Activated CD4-positive, alpha-beta T cell treated with anti-CD3 and anti-CD28 coated beads for 36 hours (primary cell): ENCODE measurements at regions of chr11 and their contacts with region 1.

Region 1: GRCh38 chr11:117143871-117144476 is at the start of gene PAFAH1B2:
- DNase-seq: peak; percentile 98
- ATAC-seq: peak; percentile 93
- H3K4me3 Mint-ChIP-seq: peak within 1 kb of the TSS; percentile 99
- H3K27ac Mint-ChIP-seq: peak within 1 kb of the TSS; percentile 94
- H3K4me1 Mint-ChIP-seq: peaks cover 42% of the 10 kb centered on the region
- H3K27me3 Mint-ChIP-seq: peaks cover 3% of the 10 kb centered on the region
- total RNA-seq, gene PAFAH1B2: 44.8 to 57.5 TPM

Region 2: GRCh38 chr11:117226388-117227385 is 82.7 kb after region 1 on chr11:
- CTCF ChIA-PET with region 1: interaction called, 10 read pairs
- POLR2A ChIA-PET with region 1: interaction called, 5 read pairs
- intact Hi-C with region 1: loop called (anchors 1 to 5 kb)
- DNase-seq: peak; percentile 59
- ATAC-seq: peak; percentile 52
- H3K4me3 Mint-ChIP-seq: no peak overlapping the region
- H3K27ac Mint-ChIP-seq: peak overlapping the region; percentile 25
- H3K4me1 Mint-ChIP-seq: peaks cover 30% of the 10 kb centered on the region
- H3K27me3 Mint-ChIP-seq: no peaks in the 10 kb centered on the region

Region 3: DNA sequence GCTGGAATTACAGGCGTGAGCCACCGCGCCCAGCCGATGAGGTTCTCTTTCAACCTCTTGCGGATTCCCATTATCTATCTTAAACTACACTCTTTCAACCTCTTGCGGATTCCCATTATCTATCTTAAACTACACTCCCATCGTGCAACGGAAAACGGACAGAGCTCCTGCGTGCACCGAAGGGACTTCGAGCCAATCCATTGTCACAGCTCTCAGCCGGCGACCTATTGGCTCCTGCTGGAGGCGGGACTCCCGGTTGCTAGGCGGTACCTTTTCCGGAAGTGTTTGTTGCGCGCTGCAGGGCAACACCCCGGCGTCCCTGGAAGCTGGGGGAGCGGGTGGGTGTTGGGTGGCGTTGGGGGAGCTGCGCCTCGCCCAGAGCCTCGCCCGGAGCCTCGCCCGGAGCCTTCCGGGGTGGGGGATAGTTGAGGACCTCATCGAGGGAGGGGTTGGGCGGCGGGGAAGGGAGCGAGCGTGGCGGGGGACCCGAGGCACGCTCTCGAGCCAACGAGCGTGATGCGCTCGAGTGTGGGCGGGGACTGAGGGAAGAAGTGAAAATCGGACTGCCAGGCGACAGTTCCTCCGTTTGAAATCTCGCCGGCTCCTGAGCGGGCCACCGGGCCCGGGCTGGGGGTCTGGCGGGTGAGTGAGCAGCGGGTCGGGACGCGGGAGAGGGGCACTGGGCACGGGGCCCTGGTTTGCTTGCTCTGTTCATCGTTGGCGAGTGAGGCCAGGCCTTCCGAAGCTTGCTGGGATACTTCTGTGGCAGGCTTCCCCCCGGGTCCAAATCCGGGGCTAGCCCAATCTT is 183.8 kb after region 1 on chr11 and contains the start of gene CEP164:
- CTCF ChIA-PET with region 1: no interaction called
- POLR2A ChIA-PET with region 1: no interaction called
- intact Hi-C with region 1: loop called in 1 of 2 experiments (anchors 5 kb)
- DNase-seq: peak; percentile 96
- ATAC-seq: peak; percentile 97
- H3K4me3 Mint-ChIP-seq: no peak within 1 kb of the TSS
- H3K27ac Mint-ChIP-seq: peak within 1 kb of the TSS; percentile 73
- H3K4me1 Mint-ChIP-seq: peaks cover 13% of the 10 kb centered on the region
- H3K27me3 Mint-ChIP-seq: no peaks in the 10 kb centered on the region
- total RNA-seq, gene CEP164: 30.3 to 31.0 TPM

Region 4: GRCh38 chr11:117489999-117490679 is 346.2 kb after region 1 on chr11:
- CTCF ChIA-PET with region 1: no interaction called
- POLR2A ChIA-PET with region 1: no interaction called
- intact Hi-C with region 1: no loop called
- DNase-seq: no peak
- ATAC-seq: no peak
- H3K4me3 Mint-ChIP-seq: no peak overlapping the region
- H3K27ac Mint-ChIP-seq: no peak overlapping the region
- H3K4me1 Mint-ChIP-seq: no peaks in the 10 kb centered on the region
- H3K27me3 Mint-ChIP-seq: peaks cover 6% of the 10 kb centered on the region

Region 5: GRCh38 chr11:118334745-118335144 is 1190.8 kb after region 1 on chr11:
- CTCF ChIA-PET with region 1: no interaction called
- POLR2A ChIA-PET with region 1: no interaction called
- intact Hi-C with region 1: no loop called
- DNase-seq: no peak
- ATAC-seq: peak; percentile 16
- H3K4me3 Mint-ChIP-seq: peak overlapping the region; percentile 57
- H3K27ac Mint-ChIP-seq: peak overlapping the region; percentile 97
- H3K4me1 Mint-ChIP-seq: peaks cover 48% of the 10 kb centered on the region
- H3K27me3 Mint-ChIP-seq: no peaks in the 10 kb centered on the region